ENCODE measurements at regions of chr17 and their contacts with region 1.

Region 1: GRCh38 chr17:601244-601925 is 113.3 kb downstream of the VPS53 start:
- DNase-seq: no peak
- H3K4me3 ChIP-seq: no peak overlapping the region
- H3K27ac ChIP-seq: no peak overlapping the region
- H3K4me1 ChIP-seq: peaks cover 15% of the 10 kb centered on the region
- H3K27me3 ChIP-seq: no peaks in the 10 kb centered on the region
- CTCF ChIP-seq: no peak

Region 2: GRCh38 chr17:199806-200540 is 401.4 kb before region 1 on chr17:
- CTCF ChIA-PET with region 1: no interaction called
- dilution Hi-C with region 1: loop called (anchors 5 kb)
- in situ Hi-C with region 1: no loop called
- intact Hi-C with region 1: no loop called
- DNase-seq: peak; percentile 20
- H3K4me3 ChIP-seq: no peak overlapping the region
- H3K27ac ChIP-seq: no peak overlapping the region
- H3K4me1 ChIP-seq: no peaks in the 10 kb centered on the region
- H3K27me3 ChIP-seq: no peaks in the 10 kb centered on the region
- CTCF ChIP-seq: no peak

Region 3: GRCh38 chr17:511001-511698 is 90.2 kb before region 1 on chr17:
- CTCF ChIA-PET with region 1: no interaction called
- dilution Hi-C with region 1: loop called (anchors 5 kb)
- in situ Hi-C with region 1: no loop called
- intact Hi-C with region 1: no loop called
- DNase-seq: peak; percentile 55
- H3K4me3 ChIP-seq: no peak overlapping the region
- H3K27ac ChIP-seq: no peak overlapping the region
- H3K4me1 ChIP-seq: peaks cover 35% of the 10 kb centered on the region
- H3K27me3 ChIP-seq: no peaks in the 10 kb centered on the region
- CTCF ChIP-seq: no peak

Region 4: GRCh38 chr17:565521-565920 is 35.9 kb before region 1 on chr17:
- CTCF ChIA-PET with region 1: no interaction called
- dilution Hi-C with region 1: loop called (anchors 5 kb)
- in situ Hi-C with region 1: no loop called
- intact Hi-C with region 1: no loop called
- DNase-seq: no peak
- H3K4me3 ChIP-seq: no peak overlapping the region
- H3K27ac ChIP-seq: no peak overlapping the region
- H3K4me1 ChIP-seq: peaks cover 29% of the 10 kb centered on the region
- H3K27me3 ChIP-seq: no peaks in the 10 kb centered on the region
- CTCF ChIP-seq: peak in 1 of 2 donors; percentile 23

Region 5: DNA sequence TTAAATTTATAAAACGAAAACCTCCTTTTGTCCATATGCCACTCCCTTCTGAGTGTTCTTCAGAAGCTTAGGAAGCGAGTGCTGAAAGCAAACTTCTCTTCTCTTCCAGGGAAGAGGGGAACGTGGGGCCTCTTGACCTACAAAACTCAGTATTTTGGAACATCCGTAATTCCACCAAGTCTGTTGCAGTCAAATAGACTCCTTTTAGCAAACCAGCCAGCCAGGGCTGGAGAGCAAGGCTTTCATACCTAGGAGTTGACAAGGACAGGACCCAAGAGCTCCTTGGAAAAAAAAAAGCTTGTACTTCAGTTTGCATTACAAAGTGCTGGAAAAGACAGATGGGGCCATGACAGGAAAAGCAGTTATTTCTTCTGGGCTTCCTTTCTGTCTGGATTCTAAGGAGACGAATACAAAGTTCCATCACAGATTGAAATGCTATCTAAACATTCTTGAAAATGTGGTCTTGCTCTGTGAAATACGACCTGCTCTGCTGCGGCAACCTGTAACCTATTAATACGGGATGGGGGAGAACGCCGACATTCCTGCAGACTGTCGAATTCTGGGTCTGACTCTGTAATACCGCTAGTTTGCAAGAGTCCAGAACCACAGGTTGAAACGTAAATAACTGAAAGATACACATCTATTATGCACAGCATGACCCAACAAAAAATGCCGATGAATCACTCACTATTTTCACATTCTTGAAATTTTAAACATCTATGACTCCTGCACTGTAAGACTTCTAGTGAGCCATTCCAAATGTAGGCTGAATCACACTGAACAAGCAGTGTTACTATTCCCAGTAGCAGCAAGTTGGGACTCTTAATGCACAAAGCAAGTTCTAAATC is 92.6 kb after region 1 on chr17:
- CTCF ChIA-PET with region 1: no interaction called
- dilution Hi-C with region 1: loop called (anchors 5 kb)
- in situ Hi-C with region 1: no loop called
- intact Hi-C with region 1: no loop called
- DNase-seq: peak; percentile 95
- H3K4me3 ChIP-seq: no peak overlapping the region
- H3K27ac ChIP-seq: peak overlapping the region; percentile 69
- H3K4me1 ChIP-seq: peaks cover 47% of the 10 kb centered on the region
- H3K27me3 ChIP-seq: no peaks in the 10 kb centered on the region
- CTCF ChIP-seq: no peak

Measured in mammary epithelial cell (primary cell).